Activated B cell treated with CpG ODN at 0.5 μM for 24 hours (primary cell): ENCODE measurements at regions of chr9 and their contacts with region 1.

Region 1: DNA sequence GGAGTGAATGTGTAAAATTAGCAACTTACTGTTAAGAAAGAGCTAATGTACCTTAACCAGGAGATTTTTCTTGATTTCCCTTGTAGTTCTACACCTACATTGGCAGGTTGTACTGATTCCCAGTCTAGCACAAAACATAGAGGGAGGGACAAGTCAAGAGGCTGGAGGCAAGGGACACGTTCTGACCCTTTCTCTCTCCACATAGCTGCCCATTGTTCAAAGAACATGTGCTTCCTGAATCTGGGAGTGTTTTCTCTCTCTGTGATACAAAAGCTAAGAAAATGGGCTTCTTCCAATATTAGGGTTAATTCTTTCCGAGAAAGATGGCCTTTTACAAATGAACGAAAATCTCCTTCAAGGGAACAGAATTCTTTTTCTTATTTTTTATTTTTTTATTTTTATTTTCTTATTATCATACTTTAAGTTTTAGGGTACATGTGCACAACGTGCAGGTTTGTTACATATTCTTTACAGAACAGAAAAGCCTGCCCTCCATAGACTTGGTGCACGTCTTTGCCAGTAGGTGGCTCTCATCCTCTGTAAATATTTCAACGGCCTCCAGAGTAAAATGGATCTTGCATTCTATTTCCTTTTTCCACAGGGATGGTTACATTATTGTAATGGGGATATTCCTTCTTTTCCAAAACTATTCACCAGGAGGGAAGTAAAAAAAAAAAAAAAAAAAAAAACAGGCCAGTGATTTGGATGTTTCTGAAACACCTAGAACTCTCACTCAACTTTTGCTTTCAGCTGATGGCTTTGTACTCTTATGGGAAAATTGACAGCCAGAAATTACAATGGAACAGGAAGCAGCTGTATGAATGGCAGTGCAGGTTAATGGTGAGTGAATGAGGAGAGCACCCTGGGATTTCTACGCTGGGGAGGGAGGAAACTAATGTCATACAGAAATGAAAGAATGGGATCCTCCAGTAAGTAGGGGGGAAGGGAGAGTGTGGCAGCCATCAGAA is 13.1 kb upstream of the IFNA5 start:
- DNase-seq: no peak
- ATAC-seq: peak; percentile 65
- H3K4me3 Mint-ChIP-seq: no peak overlapping the region
- H3K27ac Mint-ChIP-seq: no peak overlapping the region
- H3K4me1 Mint-ChIP-seq: peaks cover 3% of the 10 kb centered on the region
- H3K27me3 Mint-ChIP-seq: no peaks in the 10 kb centered on the region
- CTCF ChIP-seq: no peak

Region 2: DNA sequence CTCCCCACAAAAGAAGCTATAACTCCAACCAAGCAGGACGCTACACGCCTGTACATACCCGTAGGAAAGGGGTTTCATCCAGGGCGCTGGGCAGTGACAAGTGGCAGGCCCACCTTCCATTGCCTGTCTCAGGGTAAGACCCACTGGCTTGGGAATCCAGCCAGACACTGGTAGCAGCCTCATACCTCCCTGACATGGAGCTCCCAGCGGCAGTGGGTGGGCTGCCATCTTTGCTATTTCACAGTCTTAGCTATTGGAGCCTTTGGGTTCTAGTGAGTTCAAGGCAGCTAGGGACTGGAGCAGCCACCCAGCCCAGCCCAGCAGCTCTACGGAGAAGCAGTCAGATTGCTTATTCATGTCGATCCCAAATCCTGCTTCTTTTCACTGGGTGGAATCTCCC is 107.9 kb before region 1 on chr9:
- CTCF ChIA-PET with region 1: no interaction called
- POLR2A ChIA-PET with region 1: no interaction called
- intact Hi-C with region 1: loop called (anchors 2 kb)
- DNase-seq: no peak
- ATAC-seq: no peak
- H3K4me3 Mint-ChIP-seq: no peak overlapping the region
- H3K27ac Mint-ChIP-seq: no peak overlapping the region
- H3K4me1 Mint-ChIP-seq: peaks cover 13% of the 10 kb centered on the region
- H3K27me3 Mint-ChIP-seq: peaks cover 5% of the 10 kb centered on the region
- CTCF ChIP-seq: no peak

Region 3: DNA sequence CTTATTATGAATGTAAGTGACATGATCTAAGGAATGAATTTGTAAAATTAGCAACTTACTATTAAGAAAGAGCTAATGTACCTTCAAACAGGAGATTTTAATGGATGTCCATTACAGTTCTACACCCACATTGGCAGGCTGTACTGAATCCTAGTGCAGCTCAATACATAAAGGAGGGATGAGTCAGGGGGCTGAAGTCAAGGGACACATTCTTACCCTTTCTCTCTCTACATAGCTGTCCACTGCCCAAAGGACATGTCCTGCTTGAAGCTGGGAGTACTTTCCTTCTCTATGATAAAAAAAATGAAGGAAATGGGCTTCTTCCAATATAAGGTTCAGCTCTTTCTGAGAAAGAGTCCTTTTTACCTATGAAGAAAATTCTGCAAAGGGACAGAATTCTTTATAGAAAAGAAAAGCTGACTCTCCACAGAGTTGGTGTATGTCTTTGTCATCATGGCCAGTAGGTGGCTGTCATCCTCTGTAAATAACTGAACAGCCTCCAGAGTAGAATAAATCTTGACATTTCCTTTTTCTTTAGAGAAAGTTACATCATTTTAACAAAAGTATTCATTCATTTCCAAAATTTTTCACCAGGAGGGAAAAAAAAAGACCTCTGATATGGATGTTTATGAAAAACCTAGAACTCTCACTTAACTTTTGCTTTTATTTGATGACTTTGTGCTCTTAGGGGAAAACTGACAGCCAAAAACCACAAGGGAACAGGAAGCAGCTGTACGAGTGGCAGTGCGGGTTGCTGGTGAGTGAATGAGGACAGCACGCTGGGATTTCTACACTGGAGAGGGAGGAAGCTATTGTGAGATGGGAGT is 65.3 kb before region 1 on chr9:
- CTCF ChIA-PET with region 1: interaction called, 3 read pairs
- POLR2A ChIA-PET with region 1: no interaction called
- intact Hi-C with region 1: loop called (anchors 2 kb)
- DNase-seq: no peak
- ATAC-seq: peak; percentile 61
- H3K4me3 Mint-ChIP-seq: no peak overlapping the region
- H3K27ac Mint-ChIP-seq: no peak overlapping the region
- H3K4me1 Mint-ChIP-seq: peaks cover 4% of the 10 kb centered on the region
- H3K27me3 Mint-ChIP-seq: peaks cover 25% of the 10 kb centered on the region
- CTCF ChIP-seq: no peak

Region 4: DNA sequence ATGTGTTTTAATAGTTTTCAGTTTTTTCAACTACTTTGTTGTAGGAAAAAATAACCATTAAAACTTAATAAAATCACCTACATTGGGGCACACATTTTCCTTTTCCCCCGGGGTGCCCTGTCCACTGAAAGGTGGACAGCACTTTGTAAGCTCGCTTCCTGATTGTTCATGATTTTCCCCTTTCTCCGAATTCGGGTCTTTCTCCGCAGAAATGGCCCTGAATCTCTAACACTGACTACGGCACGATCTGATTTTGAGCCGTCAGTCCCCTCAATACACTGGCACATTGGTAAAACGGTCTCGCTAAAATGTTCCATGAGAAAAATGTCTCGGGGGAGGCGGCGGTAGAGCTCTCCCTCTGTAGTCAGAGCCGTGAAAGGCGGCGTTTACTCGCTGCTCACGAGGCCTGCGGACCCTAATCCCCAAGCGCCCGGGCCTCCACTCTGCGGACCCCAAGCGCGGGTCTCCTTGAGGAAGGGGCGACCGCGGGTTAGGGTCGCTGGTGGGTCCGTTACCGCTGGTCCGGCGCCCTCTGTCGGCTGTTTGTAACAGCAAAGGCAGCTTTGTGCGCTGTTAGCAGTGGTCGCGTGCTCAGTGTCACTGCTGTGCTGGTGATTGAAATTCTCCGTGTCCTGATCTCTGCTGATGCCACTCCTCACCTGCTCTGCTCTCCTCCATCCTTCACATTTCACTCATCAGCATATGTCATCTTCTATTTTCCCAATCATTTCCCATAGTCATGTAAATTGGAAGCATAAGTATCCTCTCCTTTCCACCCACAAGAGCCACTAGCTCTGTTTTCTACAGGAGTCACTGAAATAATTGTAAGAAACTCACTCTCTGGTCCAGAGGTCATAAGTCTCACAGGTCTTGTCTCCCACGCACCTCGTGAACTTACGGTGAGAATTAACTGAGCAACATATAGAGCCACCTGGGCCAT is 77.8 kb after region 1 on chr9:
- CTCF ChIA-PET with region 1: interaction called, 27 read pairs
- POLR2A ChIA-PET with region 1: no interaction called
- intact Hi-C with region 1: no loop called
- DNase-seq: peak; percentile 47
- ATAC-seq: peak; percentile 65
- H3K4me3 Mint-ChIP-seq: peak overlapping the region; percentile 66
- H3K27ac Mint-ChIP-seq: no peak overlapping the region
- H3K4me1 Mint-ChIP-seq: peaks cover 12% of the 10 kb centered on the region
- H3K27me3 Mint-ChIP-seq: peaks cover 57% of the 10 kb centered on the region
- CTCF ChIP-seq: no peak

Region 5: DNA sequence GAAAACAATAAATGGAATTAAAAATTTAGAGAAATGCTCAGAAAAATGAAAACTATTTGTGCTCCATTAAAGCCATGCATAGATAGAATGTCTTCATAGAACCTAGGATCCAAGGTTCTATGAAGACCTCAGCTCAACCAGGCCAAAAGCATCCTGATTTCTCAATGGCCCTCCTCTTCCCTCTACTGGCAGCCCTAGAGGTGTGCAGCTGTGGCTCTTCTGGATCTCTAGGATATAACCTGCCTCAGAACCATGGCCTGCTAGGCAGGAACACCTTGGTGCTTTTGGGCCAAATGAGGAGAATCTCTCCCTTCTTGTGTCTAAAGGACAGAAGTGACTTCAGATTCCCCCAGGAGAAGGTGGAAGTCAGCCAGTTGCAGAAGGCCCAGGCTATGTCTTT is 137.1 kb after region 1 on chr9:
- CTCF ChIA-PET with region 1: interaction called, 7 read pairs
- POLR2A ChIA-PET with region 1: no interaction called
- intact Hi-C with region 1: loop called (anchors 1 kb)
- DNase-seq: no peak
- ATAC-seq: peak; percentile 75
- H3K4me3 Mint-ChIP-seq: no peak overlapping the region
- H3K27ac Mint-ChIP-seq: no peak overlapping the region
- H3K4me1 Mint-ChIP-seq: no peaks in the 10 kb centered on the region
- H3K27me3 Mint-ChIP-seq: peaks cover 33% of the 10 kb centered on the region
- CTCF ChIP-seq: no peak

Region 6: DNA sequence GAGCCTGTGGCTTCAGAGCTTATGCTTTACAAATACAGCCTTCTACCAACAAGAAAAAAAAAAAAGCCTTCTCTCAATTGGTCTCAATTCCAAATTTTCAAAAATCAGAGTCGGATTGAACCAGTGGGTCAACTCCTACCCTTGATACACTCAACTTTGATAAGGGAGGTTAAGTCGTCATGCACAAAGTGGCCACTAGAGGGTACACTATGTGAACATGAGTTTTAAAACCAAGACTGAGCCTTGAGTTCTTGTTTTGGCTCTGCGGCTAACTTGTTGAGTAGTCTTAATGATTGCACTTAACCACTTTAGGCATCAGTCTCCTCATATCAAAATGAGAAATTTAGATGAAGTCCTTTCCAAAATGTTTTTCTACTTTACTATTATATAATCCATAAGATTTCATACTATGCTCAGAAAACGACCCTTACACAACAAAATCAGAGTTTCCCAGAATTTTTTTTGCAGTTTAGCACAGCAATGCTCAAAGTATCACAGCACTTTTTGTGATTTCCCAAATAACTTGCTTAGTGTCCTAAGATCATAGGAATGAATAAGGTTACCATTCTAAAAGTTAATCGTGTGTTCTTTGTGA is 391.3 kb after region 1 on chr9:
- CTCF ChIA-PET with region 1: interaction called, 5 read pairs
- POLR2A ChIA-PET with region 1: no interaction called
- intact Hi-C with region 1: loop called (anchors 1 kb)
- DNase-seq: no peak
- ATAC-seq: peak; percentile 68
- H3K4me3 Mint-ChIP-seq: no peak overlapping the region
- H3K27ac Mint-ChIP-seq: no peak overlapping the region
- H3K4me1 Mint-ChIP-seq: no peaks in the 10 kb centered on the region
- H3K27me3 Mint-ChIP-seq: peaks cover 16% of the 10 kb centered on the region
- CTCF ChIP-seq: peak; percentile 48

Region 7: GRCh38 chr9:22452415-22453010 is 1134.3 kb after region 1 on chr9:
- CTCF ChIA-PET with region 1: no interaction called
- POLR2A ChIA-PET with region 1: no interaction called
- intact Hi-C with region 1: loop called (anchors 5 kb)
- DNase-seq: no peak
- ATAC-seq: peak; percentile 65
- H3K4me3 Mint-ChIP-seq: no peak overlapping the region
- H3K27ac Mint-ChIP-seq: no peak overlapping the region
- H3K4me1 Mint-ChIP-seq: peaks cover 9% of the 10 kb centered on the region
- H3K27me3 Mint-ChIP-seq: peaks cover 42% of the 10 kb centered on the region
- CTCF ChIP-seq: peak; percentile 90